ENCODE measurements at regions of chr11 and their contacts with region 1.

Region 1: DNA sequence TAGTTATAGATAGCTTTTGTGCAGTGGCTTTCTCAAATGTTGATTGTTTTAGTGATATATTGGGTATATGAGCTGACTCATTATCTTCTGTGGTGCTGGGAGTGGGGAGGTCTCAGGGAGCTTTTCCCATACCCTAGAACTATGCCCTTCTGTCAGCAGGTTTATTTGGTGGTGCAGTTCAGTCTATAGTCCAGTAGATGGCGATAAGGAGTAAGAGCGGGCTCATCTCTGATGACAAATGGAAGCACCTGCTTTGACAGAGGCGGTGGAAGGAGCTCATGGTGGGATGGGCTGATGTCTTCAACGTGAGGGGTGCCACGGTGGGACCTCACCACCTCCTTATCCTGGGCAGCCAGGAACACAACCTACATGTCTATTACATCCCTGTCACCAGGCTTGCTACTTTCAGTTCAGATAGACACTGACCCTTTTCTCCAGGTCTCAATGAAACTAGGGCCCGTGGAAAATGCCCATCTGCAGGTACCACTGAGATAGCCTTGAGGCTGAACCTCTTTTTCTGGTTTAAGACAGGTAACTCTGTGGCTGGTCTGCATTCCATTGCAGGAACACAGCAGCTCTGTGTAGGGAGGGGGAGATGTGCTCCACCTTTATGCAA is 13.0 kb upstream of the OR6A2 start:
- DNase-seq: peak; percentile 31
- H3K4me3 Mint-ChIP-seq: no peak overlapping the region
- H3K27ac Mint-ChIP-seq: no peak overlapping the region
- H3K4me1 Mint-ChIP-seq: no peaks in the 10 kb centered on the region
- H3K27me3 Mint-ChIP-seq: peaks cover 25% of the 10 kb centered on the region

Region 2: DNA sequence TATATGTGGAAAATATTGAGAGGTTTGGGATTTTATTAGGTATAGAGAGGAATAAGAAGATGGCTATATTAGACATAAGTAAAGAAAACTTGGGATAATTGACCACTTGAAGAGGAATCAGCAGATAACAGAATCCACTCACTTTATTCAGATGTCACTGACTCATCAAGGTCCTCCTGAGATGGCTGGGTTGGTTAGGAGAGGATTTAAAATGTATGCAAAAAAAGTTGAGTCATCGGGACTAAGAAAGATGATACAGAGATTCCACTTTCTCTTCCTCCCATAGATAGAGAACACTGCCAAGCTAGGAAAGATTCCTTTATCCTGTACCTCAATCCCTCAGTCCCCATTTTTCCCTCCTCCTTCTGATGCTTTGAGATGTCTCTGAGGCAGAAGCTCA is 13.1 kb before region 1 on chr11 and contains the start of gene OR6A2:
- CTCF ChIA-PET with region 1: interaction called, 17 read pairs
- POLR2A ChIA-PET with region 1: no interaction called
- intact Hi-C with region 1: no loop called
- DNase-seq: no peak
- H3K4me3 Mint-ChIP-seq: no peak within 1 kb of the TSS
- H3K27ac Mint-ChIP-seq: no peak within 1 kb of the TSS
- H3K4me1 Mint-ChIP-seq: peaks cover 4% of the 10 kb centered on the region
- H3K27me3 Mint-ChIP-seq: peaks cover 3% of the 10 kb centered on the region
- total RNA-seq, gene OR6A2: not detected

Region 3: DNA sequence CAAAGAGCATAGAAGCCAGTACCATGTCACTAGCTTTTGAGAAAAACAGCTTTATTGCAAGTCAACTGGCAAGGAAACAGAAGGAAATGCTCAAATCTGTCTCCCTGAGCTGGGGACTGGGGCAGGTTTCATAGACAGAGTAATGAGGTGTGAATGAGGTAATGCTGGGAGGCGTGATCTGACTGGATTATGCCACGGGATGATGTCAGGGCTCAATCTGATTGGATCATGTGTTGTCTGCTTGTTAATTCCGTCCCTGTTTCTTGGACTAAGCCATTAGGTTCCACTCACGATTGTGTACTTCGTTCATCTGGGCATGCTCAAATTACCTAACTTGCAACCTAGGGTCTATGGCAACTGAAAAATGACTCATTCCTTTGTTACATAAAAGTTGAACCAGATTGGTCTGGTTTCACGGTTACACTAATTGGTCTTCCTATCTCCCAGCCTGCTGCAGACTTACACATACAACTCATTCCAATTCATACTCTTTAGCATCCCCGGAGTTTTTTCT is 12.8 kb after region 1 on chr11:
- CTCF ChIA-PET with region 1: interaction called, 27 read pairs
- POLR2A ChIA-PET with region 1: no interaction called
- intact Hi-C with region 1: no loop called
- DNase-seq: peak; percentile 18
- H3K4me3 Mint-ChIP-seq: no peak overlapping the region
- H3K27ac Mint-ChIP-seq: no peak overlapping the region
- H3K4me1 Mint-ChIP-seq: no peaks in the 10 kb centered on the region
- H3K27me3 Mint-ChIP-seq: peaks cover 7% of the 10 kb centered on the region